CD8-positive, alpha-beta T cell (primary cell): ENCODE measurements at regions of chr7 and their contacts with region 1.

Region 1: DNA sequence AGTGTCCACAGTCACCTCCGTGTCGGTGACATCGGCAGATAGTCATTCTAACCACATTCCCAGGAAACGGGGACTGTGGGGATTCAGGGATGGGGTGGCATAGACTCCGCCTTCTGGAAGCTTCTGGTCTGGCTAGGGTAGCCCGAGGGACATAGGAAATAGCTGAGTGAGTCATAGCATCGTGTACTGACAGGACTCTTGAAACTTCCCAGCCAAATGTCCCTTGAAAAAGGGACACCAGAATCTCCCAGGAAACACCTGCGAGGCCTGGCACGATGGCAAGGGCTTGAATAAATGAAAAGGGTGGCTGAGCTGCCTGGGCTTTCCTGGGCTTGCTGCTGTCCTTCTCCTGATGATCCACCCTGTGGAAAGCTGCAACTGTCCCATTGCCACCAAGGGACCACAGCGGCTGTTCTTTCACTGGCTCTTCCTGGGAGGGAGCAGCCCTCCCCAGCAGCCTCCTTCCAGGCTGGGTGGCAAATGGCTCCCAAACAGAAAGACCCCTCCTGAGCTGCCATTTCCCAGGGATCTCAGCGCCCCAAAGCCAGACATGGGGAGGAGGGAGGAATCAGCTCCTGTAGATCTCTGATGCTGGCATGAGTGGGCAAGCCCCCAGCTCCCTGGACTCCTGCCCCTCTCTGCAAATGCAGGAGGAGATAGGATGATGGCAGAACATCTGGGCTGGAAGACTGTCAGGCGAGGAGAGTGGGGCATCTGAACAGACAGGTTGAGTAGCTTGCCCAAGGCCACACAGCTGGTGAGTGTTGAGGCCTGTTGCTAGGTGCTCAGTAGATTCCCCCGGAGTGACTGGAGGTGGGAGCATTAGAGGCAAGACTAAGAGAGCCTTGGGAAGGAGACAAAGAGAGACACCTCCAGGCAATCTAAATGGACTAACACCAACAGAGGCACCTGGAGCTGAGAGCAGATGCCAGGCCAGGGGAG is 84.4 kb upstream of the LRRC4 start:
- DNase-seq: peak in 1 of 9 experiments; percentile 29
- ATAC-seq: no peak
- H3K4me3 ChIP-seq: no peak overlapping the region
- H3K4me3 Mint-ChIP-seq: no peak overlapping the region
- H3K27ac ChIP-seq: no peak overlapping the region
- H3K27ac Mint-ChIP-seq: no peak overlapping the region
- H3K4me1 ChIP-seq: peaks cover 25% of the 10 kb centered on the region
- H3K4me1 Mint-ChIP-seq: peaks cover 34% of the 10 kb centered on the region
- H3K27me3 ChIP-seq: no peaks in the 10 kb centered on the region
- H3K27me3 Mint-ChIP-seq: no peaks in the 10 kb centered on the region
- CTCF ChIP-seq: no peak

Region 2: DNA sequence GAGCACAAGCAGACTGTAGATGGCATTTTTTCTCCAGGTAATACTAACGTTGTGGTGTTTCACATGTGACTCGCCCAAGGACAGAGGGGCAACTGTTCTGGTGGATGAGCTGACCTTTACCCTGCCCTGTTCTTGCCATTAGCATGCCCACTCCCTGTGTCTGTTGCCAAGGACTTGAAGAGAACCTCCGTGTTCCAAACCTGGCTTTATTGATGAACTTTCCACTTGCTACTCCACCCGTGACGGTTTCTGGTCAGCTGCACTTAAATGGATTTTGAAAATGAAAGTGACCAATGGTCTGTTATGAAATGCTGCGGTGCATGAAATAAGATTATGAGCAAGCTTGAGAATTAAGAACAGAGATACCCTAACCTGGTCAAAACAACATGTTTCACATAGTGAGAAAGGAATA is 114.8 kb before region 1 on chr7:
- CTCF ChIA-PET with region 1: no interaction called
- POLR2A ChIA-PET with region 1: no interaction called
- intact Hi-C with region 1: no loop called
- DNase-seq: no peak
- ATAC-seq: no peak
- H3K4me3 ChIP-seq: no peak overlapping the region
- H3K4me3 Mint-ChIP-seq: no peak overlapping the region
- H3K27ac ChIP-seq: no peak overlapping the region
- H3K27ac Mint-ChIP-seq: no peak overlapping the region
- H3K4me1 ChIP-seq: peaks cover 10% of the 10 kb centered on the region
- H3K4me1 Mint-ChIP-seq: peaks cover 23% of the 10 kb centered on the region
- H3K27me3 ChIP-seq: no peaks in the 10 kb centered on the region
- H3K27me3 Mint-ChIP-seq: no peaks in the 10 kb centered on the region
- CTCF ChIP-seq: no peak

Region 3: DNA sequence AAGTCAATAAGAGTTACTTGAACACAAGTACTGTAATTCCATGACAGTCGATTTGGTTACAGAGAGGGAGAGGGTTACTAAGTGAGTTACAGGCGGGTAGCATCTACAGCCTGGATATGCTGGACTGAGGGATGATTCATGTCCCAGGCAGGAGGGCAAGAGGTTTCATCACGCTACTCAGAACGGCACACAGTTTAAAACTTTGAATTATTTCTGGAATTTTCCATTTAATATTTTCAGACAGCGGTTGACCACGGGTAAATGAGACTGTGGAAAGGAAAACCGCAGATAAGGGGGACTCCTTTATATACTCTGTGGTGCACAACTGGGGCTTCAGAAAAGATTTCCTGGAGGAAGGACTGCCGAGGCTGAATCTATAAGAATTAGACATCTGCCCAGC is 58.8 kb before region 1 on chr7:
- CTCF ChIA-PET with region 1: no interaction called
- POLR2A ChIA-PET with region 1: interaction called, 4 read pairs
- intact Hi-C with region 1: loop called in 1 of 2 experiments (anchors 5 kb)
- DNase-seq: no peak
- ATAC-seq: no peak
- H3K4me3 ChIP-seq: no peak overlapping the region
- H3K4me3 Mint-ChIP-seq: no peak overlapping the region
- H3K27ac ChIP-seq: no peak overlapping the region
- H3K27ac Mint-ChIP-seq: no peak overlapping the region
- H3K4me1 ChIP-seq: peaks cover 55% of the 10 kb centered on the region
- H3K4me1 Mint-ChIP-seq: peaks cover 73% of the 10 kb centered on the region
- H3K27me3 ChIP-seq: no peaks in the 10 kb centered on the region
- H3K27me3 Mint-ChIP-seq: no peaks in the 10 kb centered on the region
- CTCF ChIP-seq: no peak